ENCODE measurements at regions of chr7 and their contacts with region 1.

Region 1: DNA sequence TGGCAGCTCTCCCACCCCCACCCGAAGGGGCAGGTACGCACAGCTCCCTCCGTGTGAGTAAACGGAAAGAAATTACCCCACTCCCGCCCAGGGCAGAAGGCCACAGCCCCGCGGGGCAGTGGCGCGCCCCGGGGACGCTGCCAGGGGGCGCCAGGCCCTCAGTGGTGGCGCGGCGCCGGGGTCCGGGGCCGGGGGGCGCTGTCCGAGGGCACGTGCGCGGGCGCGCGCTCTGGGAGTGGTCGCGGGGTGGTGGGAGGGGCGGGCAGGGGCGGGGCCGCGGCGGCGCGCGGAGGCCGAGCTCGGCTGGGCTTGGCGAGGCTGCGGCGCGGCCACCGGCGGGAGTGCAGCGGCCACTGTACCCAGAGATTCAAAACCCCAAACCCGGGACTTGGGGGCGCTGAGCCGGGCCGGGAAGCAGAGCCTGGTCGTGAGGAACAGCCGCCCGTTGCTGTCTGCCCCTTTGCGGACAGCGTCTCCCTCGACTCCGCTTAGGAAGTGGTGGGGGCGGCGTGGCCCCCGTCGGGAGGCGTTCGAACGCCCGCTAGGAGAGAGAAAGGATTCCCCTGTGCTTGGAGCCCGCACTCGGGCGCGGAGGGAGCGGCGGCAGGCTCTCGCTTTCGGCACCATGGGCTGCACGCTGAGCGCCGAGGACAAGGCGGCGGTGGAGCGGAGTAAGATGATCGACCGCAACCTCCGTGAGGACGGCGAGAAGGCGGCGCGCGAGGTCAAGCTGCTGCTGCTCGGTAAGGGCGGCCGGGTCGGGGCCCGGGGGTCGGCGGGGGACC is at the start of gene GNAI1:
- DNase-seq: peak; percentile 98
- H3K4me3 ChIP-seq: peak within 1 kb of the TSS; percentile 95 to 99
- H3K27ac ChIP-seq: peak within 1 kb of the TSS; percentile 80 to 96
- H3K4me1 ChIP-seq: peaks cover 25 to 26% of the 10 kb centered on the region in 2 experiments
- H3K27me3 ChIP-seq: no peaks in the 10 kb centered on the region
- CTCF ChIP-seq: peak; percentile 60
- EP300 ChIP-seq: no peak
- RAD21 ChIP-seq: peak; percentile 75
- polyA plus RNA-seq, gene GNAI1: 67.4 and 69.1 TPM in 2 replicates

Region 2: GRCh38 chr7:80095545-80095944 is 39.2 kb before region 1 on chr7:
- CTCF ChIA-PET with region 1: interaction called, 18 read pairs
- POLR2A ChIA-PET with region 1: no interaction called
- DNase-seq: peak; percentile 21
- H3K4me3 ChIP-seq: no peak overlapping the region
- H3K27ac ChIP-seq: no peak overlapping the region
- H3K4me1 ChIP-seq: no peaks in the 10 kb centered on the region
- H3K27me3 ChIP-seq: no peaks in the 10 kb centered on the region
- CTCF ChIP-seq: peak; percentile 78
- EP300 ChIP-seq: no peak
- RAD21 ChIP-seq: peak; percentile 61

Region 3: GRCh38 chr7:80145780-80146422 is 11.2 kb after region 1 on chr7:
- CTCF ChIA-PET with region 1: interaction called, 32 read pairs
- POLR2A ChIA-PET with region 1: no interaction called
- DNase-seq: no peak
- H3K4me3 ChIP-seq: peak overlapping the region; percentile 15; a peak in 3 of 4 replicates
- H3K27ac ChIP-seq: peak overlapping the region; percentile 84 to 89
- H3K4me1 ChIP-seq: peaks cover 36 to 53% of the 10 kb centered on the region in 2 experiments
- H3K27me3 ChIP-seq: no peaks in the 10 kb centered on the region
- CTCF ChIP-seq: no peak
- EP300 ChIP-seq: no peak
- RAD21 ChIP-seq: no peak

Region 4: DNA sequence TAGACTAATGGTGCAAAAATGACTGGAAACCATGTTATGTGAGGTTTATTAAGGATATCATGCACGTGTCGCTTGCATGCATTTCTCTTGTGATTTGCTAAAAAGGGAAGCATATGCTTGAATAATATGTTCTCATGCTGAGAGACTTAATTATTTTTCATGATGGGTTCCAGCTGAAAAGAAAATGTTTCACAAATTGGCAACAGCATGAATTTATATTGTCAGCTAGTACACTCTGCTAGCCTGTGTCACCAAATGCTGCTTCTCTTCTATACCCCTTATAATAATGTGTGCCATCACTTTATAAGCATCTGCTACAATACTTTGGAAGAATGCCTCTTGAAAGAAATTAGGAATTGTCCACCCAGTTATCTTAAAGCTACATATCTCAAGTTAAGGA is 62.9 kb after region 1 on chr7:
- CTCF ChIA-PET with region 1: interaction called, 16 read pairs
- POLR2A ChIA-PET with region 1: no interaction called
- DNase-seq: no peak
- H3K4me3 ChIP-seq: no peak overlapping the region
- H3K27ac ChIP-seq: peak overlapping the region in 1 of 2 experiments; percentile 18; a peak in 1 of 4 replicates
- H3K4me1 ChIP-seq: peaks cover 0 to 7% of the 10 kb centered on the region in 2 experiments; a peak in 1 of 4 replicates
- H3K27me3 ChIP-seq: no peaks in the 10 kb centered on the region
- CTCF ChIP-seq: no peak
- EP300 ChIP-seq: no peak
- RAD21 ChIP-seq: no peak

Region 5: GRCh38 chr7:80244206-80244916 is 109.6 kb after region 1 on chr7:
- CTCF ChIA-PET with region 1: no interaction called
- POLR2A ChIA-PET with region 1: no interaction called
- DNase-seq: no peak
- H3K4me3 ChIP-seq: no peak overlapping the region
- H3K27ac ChIP-seq: no peak overlapping the region
- H3K4me1 ChIP-seq: peaks cover 0 to 10% of the 10 kb centered on the region in 2 experiments; a peak in 1 of 4 replicates
- H3K27me3 ChIP-seq: no peaks in the 10 kb centered on the region
- CTCF ChIP-seq: no peak
- EP300 ChIP-seq: no peak
- RAD21 ChIP-seq: no peak

Region 6: GRCh38 chr7:80428161-80429054 is 293.7 kb after region 1 on chr7:
- CTCF ChIA-PET with region 1: interaction called, 23 read pairs
- POLR2A ChIA-PET with region 1: no interaction called
- DNase-seq: peak; percentile 37
- H3K4me3 ChIP-seq: no peak overlapping the region
- H3K27ac ChIP-seq: peak overlapping the region in 1 of 2 experiments; percentile 38; a peak in 1 of 4 replicates
- H3K4me1 ChIP-seq: no peaks in the 10 kb centered on the region
- H3K27me3 ChIP-seq: no peaks in the 10 kb centered on the region
- CTCF ChIP-seq: peak; percentile 85
- EP300 ChIP-seq: no peak
- RAD21 ChIP-seq: peak; percentile 93